ENCODE measurements at regions of chr16 and their contacts with region 1.

Region 1: DNA sequence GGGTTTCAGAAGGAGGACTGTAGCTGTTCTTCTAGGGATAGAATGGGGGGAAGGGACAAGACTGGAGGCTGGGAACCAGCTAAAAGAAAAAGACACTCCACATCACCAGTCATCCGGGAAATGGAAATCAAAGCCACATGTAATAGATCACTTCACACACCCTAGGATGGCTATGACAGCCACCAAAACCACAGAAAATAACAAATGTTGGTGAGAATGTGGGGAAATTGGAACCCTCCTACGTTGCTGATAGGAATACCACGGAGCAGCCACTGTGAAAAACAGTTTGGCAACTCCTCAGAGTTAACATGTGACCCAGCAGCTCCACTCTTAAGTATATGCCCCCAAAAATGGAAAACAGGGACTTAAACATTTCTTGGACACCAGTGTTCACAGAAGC is 2.3 kb downstream of the TLE7 start:
- DNase-seq: no peak
- H3K4me3 ChIP-seq: no peak overlapping the region
- H3K27ac ChIP-seq: no peak overlapping the region
- H3K4me1 ChIP-seq: no peaks in the 10 kb centered on the region
- H3K27me3 ChIP-seq: no peaks in the 10 kb centered on the region
- CTCF ChIP-seq: no peak
- POLR2A ChIP-seq: no peak

Region 2: DNA sequence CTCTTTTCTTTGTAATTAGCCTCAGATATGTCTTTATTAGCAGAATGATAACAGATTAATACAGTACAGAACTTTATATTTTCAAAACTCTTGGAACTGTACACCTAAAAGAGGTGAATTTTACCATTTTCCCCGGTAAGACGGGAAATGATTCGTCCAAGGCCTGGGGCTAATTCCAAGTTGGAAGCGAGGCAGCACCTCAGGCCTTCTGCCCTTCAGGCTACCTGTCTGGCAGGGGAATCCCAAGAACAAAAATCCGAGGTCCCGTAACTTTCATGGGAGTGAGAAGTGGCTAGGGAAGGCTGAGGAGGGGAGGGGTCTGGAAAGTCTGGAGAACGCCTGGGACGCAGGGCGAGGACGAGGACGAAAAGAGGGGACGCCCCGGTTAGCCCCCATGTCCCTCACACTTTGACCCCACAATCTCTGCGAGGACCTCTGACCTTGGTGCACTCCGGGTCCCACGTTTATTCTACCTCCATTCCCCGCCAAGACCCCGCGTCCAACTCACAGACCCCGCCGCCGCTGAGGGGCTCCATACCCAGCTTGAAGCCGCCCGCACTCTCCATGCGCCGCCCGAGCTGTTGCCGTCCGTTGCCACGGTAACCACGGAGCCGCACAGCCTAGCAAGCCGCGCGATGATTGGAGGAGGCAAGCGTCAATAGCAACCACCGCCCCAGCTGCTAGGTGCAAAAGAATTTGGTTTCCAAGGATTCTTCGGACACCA is 209.2 kb before region 1 on chr16 and contains the start of gene HYDIN:
- intact Hi-C with region 1: no loop called
- DNase-seq: no peak
- H3K4me3 ChIP-seq: no peak within 1 kb of the TSS
- H3K27ac ChIP-seq: no peak within 1 kb of the TSS
- H3K4me1 ChIP-seq: no peaks in the 10 kb centered on the region
- H3K27me3 ChIP-seq: no peaks in the 10 kb centered on the region
- CTCF ChIP-seq: no peak
- POLR2A ChIP-seq: no peak
- total RNA-seq, gene HYDIN: not detected

Region 3: DNA sequence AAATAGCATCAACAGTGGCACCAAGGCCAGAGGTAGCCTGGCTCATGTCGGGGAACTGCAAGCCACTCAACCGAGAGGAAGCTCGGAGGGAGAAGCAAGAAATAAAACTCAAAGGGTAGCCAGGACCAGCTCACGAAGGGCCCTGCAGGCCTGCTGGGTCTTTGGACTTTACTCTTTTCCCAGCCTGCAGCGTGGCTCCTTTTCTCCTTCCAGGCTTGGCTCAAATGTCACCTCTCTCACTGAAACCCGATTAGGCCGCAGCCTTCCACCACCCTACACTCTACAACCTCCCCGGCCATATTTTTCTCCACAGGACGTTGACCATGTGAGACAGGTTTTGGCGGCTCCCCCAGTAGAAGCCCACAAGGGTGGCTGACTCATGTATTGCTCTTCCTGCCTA is 42.9 kb before region 1 on chr16:
- intact Hi-C with region 1: loop called (anchors 1 kb)
- DNase-seq: no peak
- H3K4me3 ChIP-seq: no peak overlapping the region
- H3K27ac ChIP-seq: no peak overlapping the region
- H3K4me1 ChIP-seq: no peaks in the 10 kb centered on the region
- H3K27me3 ChIP-seq: no peaks in the 10 kb centered on the region
- CTCF ChIP-seq: no peak
- POLR2A ChIP-seq: no peak